Activated CD8-positive, alpha-beta T cell treated with anti-CD3 and anti-CD28 coated beads for 36 hours (primary cell): ENCODE measurements at regions of chr19 and their contacts with region 1.

Region 1: DNA sequence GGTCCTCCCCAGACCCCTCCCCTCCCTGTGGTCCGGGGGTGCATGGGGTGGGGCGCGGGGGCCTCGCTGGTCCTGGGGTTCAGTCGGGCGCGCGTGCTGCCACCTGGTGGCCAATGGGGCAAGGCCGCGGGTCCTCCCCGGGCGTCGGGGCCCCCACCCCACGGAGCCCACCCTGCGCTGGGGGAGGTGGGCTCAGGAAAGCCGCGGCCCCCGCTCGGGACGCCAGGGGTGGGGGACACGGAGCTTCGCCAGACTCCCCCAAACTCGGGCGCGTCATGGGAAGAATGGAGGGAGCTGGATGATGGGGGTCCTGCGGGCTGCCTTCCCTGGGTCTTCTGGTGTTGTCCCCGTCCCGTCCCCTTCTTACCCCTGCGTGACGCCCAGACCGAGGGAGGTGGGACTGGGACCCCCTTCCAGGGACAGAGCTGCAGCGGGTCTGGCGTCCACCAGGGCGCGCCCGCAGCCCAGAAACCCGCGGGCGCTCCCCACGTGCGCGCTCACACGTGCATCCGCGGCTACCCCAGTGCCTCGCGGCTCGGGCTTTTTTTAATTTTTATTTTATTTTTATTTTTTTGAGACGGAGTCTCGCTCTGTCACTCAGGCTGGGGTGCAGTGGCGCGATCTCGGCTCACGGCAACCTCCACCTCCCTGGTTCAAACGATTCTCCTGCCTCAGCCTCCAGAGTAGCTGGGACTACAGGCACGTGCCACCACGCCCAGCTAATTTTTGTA is 19.8 kb upstream of the TCF3 start:
- DNase-seq: peak; percentile 65
- ATAC-seq: peak; percentile 54
- H3K4me3 Mint-ChIP-seq: peak overlapping the region; percentile 35
- H3K27ac Mint-ChIP-seq: no peak overlapping the region
- H3K4me1 Mint-ChIP-seq: peaks cover 17% of the 10 kb centered on the region
- H3K27me3 Mint-ChIP-seq: peaks cover 49% of the 10 kb centered on the region
- CTCF ChIP-seq: peak; percentile 99

Region 2: DNA sequence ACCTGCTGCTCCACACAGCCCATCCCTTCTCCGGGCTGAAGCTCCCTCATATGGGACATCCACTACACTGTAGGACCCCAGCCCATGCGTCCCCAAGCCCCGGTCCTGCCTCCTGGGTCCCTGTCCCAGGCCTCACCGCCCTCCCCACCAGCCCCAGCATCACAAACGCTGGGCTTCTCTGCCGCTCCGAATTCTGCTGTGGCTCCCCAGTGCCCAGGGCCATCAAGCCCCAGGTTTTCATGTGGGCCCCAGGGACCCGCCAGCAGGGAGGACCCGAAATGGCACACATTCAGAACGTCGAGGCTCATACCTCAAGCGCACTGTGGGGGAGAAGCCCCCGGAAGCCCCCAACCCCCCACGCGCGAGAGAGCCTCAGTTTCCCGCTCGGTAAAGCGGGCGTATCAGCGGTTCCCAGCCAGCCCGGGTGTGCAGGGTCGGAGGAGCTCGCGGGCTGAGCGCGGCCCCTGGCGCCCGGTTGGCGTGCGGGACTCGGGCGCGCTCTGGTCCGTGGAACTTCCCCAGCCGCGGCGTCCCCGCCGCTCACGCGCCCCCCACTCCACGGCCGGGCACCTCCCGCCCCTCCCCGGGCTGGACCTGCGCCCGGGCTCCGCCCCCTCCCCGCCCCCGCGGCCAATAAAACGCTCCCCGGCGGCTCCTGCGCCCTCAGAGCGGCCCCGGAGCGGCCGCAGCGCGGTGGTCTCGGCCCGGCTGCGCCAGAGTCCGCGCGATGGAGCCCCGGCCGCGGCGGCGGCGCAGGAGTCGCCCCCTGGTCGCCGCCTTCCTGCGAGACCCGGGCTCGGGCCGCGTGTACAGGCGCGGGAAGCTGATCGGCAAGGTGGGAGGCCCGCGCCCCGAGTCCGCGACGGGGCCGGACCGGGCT is 148.6 kb before region 1 on chr19 and contains the start of gene PLK5:
- CTCF ChIA-PET with region 1: no interaction called
- POLR2A ChIA-PET with region 1: no interaction called
- intact Hi-C with region 1: no loop called
- DNase-seq: no peak
- ATAC-seq: no peak
- H3K4me3 Mint-ChIP-seq: no peak within 1 kb of the TSS
- H3K27ac Mint-ChIP-seq: no peak within 1 kb of the TSS
- H3K4me1 Mint-ChIP-seq: peaks cover 6% of the 10 kb centered on the region
- H3K27me3 Mint-ChIP-seq: peaks cover 31% of the 10 kb centered on the region
- CTCF ChIP-seq: no peak
- total RNA-seq, gene PLK5: not detected

Region 3: DNA sequence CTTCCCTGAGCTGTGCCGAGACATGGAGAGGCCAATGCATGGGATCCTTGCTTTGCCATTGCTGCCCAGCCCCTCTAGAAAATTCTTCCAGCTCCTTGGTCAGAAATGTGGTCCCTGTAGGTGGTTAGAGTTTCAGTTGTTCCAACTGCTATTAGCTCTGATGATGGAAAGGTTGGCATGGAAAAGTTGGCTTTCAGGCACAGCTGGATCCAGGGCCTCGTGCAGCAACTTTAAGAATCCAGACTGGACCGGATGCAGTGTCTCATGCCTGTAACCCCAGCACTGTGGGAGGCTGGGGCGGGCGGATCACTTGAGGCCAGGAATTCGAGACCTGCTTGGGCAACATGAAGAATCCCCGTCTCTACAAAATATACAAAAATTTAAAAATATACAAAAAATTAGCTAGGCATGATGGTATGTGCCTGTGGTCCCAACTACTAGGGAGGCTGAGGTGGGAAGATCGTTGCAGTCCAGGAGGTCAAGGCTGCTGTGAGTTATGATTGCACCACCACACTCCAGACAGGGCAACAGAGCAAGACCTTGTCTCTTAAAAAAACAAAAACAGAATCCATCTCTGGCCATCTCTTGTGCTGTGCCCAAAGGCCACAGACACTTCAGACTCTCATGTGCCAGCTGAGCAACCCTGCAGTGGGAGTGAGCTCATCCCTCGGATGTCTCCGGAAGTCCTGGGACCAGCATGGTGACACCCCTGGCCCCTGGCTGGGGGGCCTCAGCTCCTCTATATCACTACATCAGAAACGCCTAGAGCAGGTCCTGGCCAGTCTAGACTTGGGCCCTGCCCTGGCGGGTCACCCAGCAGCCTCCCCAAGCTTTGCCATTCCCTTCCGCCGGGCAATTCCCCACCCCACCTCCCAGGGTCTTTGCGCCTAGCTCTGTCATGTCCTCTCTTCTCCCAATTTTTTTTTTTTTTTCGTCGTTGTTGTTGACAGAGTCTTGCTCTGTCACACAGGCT is 120.8 kb before region 1 on chr19:
- CTCF ChIA-PET with region 1: interaction called, 32 read pairs
- POLR2A ChIA-PET with region 1: no interaction called
- intact Hi-C with region 1: no loop called
- DNase-seq: no peak
- ATAC-seq: no peak
- H3K4me3 Mint-ChIP-seq: no peak overlapping the region
- H3K27ac Mint-ChIP-seq: no peak overlapping the region
- H3K4me1 Mint-ChIP-seq: no peaks in the 10 kb centered on the region
- H3K27me3 Mint-ChIP-seq: peaks cover 6% of the 10 kb centered on the region
- CTCF ChIP-seq: no peak

Region 4: DNA sequence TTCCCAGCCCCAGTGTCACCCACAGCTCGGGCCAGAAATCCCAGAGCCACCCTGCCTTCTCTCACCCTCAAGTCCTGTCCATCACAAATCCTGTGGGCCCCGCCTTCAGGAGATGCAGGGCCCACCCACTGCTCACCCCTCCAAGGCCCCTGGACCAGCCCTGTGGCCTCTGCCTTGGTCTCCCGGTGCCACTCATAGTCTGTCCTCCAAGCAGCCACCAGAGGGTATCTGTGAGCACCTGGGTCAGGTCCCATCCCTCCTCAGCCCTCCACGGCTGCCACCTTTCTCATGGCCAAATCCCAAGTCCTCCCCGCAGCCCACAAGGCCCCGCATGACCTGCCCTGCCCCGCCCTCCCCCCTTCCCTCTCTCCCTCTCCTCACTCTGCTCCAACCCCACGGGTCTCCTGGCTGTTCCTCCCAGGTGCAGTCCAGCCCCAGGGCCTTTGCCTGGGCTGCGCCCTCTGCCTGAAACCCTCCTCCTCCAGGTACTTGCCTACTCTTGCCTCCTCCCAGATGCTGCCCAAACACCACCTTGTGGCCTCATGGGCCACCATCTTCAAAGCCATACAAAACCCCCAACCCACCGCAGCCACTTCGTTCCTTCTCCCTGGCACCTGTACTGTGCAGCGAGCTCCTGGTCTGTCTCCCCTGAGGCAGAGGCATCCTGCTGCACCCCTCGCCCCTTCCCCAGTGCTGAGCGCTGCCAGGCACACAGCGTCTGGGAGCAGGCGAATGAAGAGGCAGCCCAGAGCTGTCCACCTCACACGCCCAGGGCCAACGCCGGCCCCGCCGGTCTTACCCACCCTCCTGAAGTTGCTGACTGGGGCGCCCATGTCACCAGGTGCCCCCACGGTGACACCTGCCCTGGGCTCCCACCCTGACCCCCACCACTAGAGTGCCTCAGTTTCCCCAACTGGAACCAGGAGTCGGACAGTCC is 53.8 kb before region 1 on chr19:
- CTCF ChIA-PET with region 1: interaction called, 11 read pairs
- POLR2A ChIA-PET with region 1: no interaction called
- intact Hi-C with region 1: no loop called
- DNase-seq: peak; percentile 54
- ATAC-seq: peak; percentile 83
- H3K4me3 Mint-ChIP-seq: no peak overlapping the region
- H3K27ac Mint-ChIP-seq: peak overlapping the region; percentile 60
- H3K4me1 Mint-ChIP-seq: peaks cover 24% of the 10 kb centered on the region
- H3K27me3 Mint-ChIP-seq: no peaks in the 10 kb centered on the region
- CTCF ChIP-seq: peak; percentile 26

Region 5: DNA sequence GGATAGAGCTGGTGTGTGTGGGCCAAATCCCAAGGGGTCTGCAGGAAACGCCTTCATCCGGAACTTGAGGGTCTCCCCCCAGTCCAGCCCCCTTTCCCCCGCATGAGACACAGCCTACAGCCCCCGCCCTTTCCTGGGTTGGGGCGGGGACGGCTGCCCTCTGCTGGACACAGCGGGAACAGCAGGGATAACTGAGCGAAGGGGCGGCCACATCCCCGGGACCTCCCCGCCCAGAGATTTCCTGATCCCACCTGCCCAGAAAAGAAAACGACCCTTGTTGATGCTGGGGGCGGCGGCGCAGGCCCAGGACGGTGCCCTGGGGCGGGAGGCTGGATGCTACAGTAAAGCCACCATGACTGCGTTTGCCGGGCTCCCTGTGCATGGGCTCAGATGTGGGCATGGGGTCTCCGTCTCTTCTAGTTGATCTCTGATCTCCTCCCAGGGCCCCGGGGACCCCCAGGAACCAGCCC is 95.3 kb after region 1 on chr19:
- CTCF ChIA-PET with region 1: interaction called, 52 read pairs
- POLR2A ChIA-PET with region 1: no interaction called
- intact Hi-C with region 1: loop called (anchors 10 kb)
- DNase-seq: peak; percentile 66
- ATAC-seq: peak; percentile 80
- H3K4me3 Mint-ChIP-seq: no peak overlapping the region
- H3K27ac Mint-ChIP-seq: no peak overlapping the region
- H3K4me1 Mint-ChIP-seq: peaks cover 2% of the 10 kb centered on the region
- H3K27me3 Mint-ChIP-seq: peaks cover 69% of the 10 kb centered on the region
- CTCF ChIP-seq: peak; percentile 95

Region 6: DNA sequence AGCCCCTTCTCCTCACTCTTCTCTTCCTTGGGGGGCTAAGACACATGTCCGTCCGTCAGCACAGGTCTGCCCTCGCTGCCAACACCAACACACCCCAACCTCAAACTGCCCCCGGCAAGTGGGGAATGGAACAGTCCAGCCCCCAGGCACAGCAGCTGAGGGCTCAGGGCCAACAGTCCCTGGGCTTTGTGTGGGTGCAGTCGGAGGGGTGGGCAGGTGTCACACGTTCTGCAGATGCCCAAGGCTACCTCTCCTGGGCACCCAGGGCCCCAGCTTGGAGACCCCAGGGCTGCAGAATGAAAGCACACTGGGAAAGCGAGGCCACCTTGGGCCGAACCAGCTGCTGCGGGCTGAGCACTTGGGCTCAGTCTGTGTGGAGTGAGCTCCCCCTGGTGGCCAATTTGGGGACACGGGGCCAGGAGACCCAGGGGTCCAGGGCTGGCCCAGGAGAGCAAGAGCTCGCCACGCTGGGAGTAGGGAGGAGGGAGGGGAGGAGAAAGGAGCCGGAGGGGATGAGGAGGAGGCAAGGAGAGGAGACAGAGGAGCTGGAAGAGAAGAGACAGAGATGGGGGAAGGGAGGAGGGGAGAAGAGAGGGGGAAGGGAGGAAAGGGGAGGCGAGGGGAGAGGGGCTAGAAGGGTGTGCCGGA is 153.8 kb after region 1 on chr19:
- CTCF ChIA-PET with region 1: interaction called, 10 read pairs
- POLR2A ChIA-PET with region 1: no interaction called
- intact Hi-C with region 1: no loop called
- DNase-seq: peak; percentile 83
- ATAC-seq: peak; percentile 93
- H3K4me3 Mint-ChIP-seq: no peak overlapping the region
- H3K27ac Mint-ChIP-seq: no peak overlapping the region
- H3K4me1 Mint-ChIP-seq: peaks cover 5% of the 10 kb centered on the region
- H3K27me3 Mint-ChIP-seq: no peaks in the 10 kb centered on the region
- CTCF ChIP-seq: peak; percentile 83